SK-N-SH (cell line): ENCODE measurements at regions of chr22 and their contacts with region 1.

Region 1: GRCh38 chr22:49305214-49305909 is 522.3 kb downstream of the BRD1 start:
- DNase-seq: peak; percentile 90
- H3K4me3 ChIP-seq: no peak overlapping the region
- H3K27ac ChIP-seq: peak overlapping the region in 1 of 2 experiments; percentile 53; a peak in 1 of 4 replicates
- H3K4me1 ChIP-seq: peaks cover 0 to 18% of the 10 kb centered on the region in 2 experiments; a peak in 1 of 4 replicates
- H3K27me3 ChIP-seq: no peaks in the 10 kb centered on the region; the same call in 1 of the 2 replicates
- CTCF ChIP-seq: peak; percentile 59
- EP300 ChIP-seq: no peak
- RAD21 ChIP-seq: peak; percentile 85

Region 2: DNA sequence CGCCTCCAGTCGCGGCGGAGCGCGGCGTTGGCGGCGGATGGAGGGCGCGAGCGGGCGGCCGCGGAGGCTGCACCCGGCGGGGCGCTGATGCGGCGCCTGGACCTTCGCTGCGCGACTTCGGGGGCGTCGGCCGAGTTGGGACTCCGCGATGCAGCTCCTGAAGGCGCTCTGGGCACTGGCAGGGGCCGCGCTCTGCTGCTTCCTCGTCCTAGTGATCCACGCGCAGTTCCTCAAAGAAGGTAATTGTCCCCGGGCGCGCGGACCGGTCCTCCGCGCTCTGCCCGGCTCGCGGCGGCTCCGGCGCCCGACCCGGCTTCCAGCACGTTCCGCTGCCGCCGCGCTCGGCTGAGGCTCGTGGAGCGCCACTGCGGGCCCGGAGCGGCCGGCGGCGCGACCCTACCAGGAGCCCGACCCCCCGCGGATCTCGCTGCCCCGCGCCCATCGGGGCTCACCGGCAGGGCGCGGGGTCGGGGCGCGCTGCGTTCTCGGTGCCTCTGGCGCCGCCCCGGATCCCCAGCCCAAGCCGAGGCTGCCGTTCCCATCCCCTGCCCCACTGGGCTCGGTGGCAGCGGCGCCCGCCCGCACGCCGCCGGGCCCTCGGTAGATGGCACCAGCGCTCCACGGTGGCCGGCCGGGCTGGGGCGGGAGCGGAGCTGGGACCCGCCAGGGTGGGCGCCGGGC is 728.9 kb before region 1 on chr22:
- CTCF ChIA-PET with region 1: interaction called, 37 read pairs
- POLR2A ChIA-PET with region 1: no interaction called
- DNase-seq: peak; percentile 88
- H3K4me3 ChIP-seq: peak overlapping the region in 1 of 2 experiments; percentile 38; a peak in 1 of 4 replicates
- H3K27ac ChIP-seq: no peak overlapping the region; a peak in 1 of 4 replicates
- H3K4me1 ChIP-seq: no peaks in the 10 kb centered on the region; a peak in 1 of 4 replicates
- H3K27me3 ChIP-seq: peaks cover 6% of the 10 kb centered on the region; the same call in 1 of the 2 replicates
- CTCF ChIP-seq: peak; percentile 22; the same call in 1 of the 2 replicates
- EP300 ChIP-seq: no peak
- RAD21 ChIP-seq: peak; percentile 59

Region 3: DNA sequence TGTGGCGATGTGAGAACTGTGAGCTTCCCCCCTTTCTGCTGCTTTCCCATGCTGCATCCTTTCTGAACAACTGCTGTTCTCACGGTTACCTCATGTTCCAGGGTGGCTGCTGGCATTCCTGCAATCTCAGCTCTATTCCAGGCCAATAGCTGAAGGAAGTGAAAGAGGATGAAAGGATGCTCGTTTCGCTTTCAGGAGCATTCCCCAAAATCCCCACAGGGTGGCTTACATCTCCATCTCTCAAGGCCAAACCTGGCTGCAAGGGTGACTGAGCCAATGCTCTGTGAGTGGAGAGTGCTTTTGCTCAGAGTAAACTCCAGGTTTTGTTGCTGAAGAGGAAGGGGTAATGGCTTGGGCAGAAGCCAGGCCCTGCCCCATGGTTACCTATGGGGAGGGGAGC is 325.9 kb before region 1 on chr22:
- CTCF ChIA-PET with region 1: interaction called, 18 read pairs
- POLR2A ChIA-PET with region 1: no interaction called
- DNase-seq: no peak
- H3K4me3 ChIP-seq: no peak overlapping the region
- H3K27ac ChIP-seq: no peak overlapping the region
- H3K4me1 ChIP-seq: peaks cover 0 to 17% of the 10 kb centered on the region in 2 experiments; a peak in 1 of 4 replicates
- H3K27me3 ChIP-seq: no peaks in the 10 kb centered on the region; the same call in 1 of the 2 replicates
- CTCF ChIP-seq: 0 out of 2 replicates have a peak, but pooled peaks have one; percentile 10
- EP300 ChIP-seq: no peak
- RAD21 ChIP-seq: peak; percentile 34

Region 4: DNA sequence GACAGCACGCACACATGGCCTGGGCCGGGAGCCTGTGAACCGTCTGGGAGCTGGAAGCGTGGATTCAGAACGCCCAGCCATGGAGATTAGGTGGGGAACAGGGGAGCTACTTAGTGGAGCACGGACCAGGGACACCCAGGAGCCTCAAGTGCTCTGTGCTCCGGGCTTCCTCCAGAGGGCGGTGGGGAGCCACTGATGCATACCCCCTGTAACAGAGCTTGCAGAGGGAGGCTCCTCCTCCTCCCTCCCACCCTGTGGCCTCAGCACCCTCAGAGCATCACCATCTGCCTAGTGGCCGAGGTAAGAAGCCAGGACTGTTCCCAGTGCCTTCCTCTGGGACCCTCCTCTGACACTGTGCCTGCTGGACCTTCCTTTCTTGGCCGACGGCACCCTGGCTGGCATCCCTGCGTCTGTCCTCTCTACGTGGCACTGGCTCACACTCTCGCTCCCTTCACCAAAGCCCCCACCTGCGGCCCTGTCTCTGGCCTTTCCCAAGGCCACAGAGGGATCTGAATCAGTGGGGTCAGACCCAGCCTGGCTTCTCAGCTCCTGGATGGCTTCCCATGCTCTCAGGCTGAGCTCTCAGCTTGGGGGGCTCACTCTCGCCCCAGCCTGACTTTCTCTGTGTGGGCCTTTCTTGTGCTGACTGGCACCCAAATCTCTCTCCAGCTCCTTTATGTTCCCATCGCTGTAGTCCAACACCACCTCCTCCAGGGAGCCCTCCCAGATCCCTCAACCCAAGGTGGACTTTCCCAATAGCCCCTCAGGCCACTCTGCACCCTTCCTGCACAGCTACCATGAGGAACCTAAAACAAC is 258.6 kb before region 1 on chr22:
- CTCF ChIA-PET with region 1: interaction called, 103 read pairs
- POLR2A ChIA-PET with region 1: no interaction called
- DNase-seq: peak; percentile 87
- H3K4me3 ChIP-seq: no peak overlapping the region
- H3K27ac ChIP-seq: peak overlapping the region in 1 of 2 experiments; percentile 12; a peak in 1 of 4 replicates
- H3K4me1 ChIP-seq: peaks cover 0 to 36% of the 10 kb centered on the region in 2 experiments; a peak in 2 of 4 replicates
- H3K27me3 ChIP-seq: no peaks in the 10 kb centered on the region; the same call in 1 of the 2 replicates
- CTCF ChIP-seq: peak; percentile 34; the same call in 1 of the 2 replicates
- EP300 ChIP-seq: no peak
- RAD21 ChIP-seq: peak; percentile 79

Region 5: GRCh38 chr22:49087198-49087597 is 218.2 kb before region 1 on chr22:
- CTCF ChIA-PET with region 1: no interaction called
- POLR2A ChIA-PET with region 1: no interaction called
- DNase-seq: no peak
- H3K4me3 ChIP-seq: no peak overlapping the region
- H3K27ac ChIP-seq: peak overlapping the region in 1 of 2 experiments; percentile 45; a peak in 1 of 4 replicates
- H3K4me1 ChIP-seq: peaks cover 0 to 19% of the 10 kb centered on the region in 2 experiments; a peak in 1 of 4 replicates
- H3K27me3 ChIP-seq: no peaks in the 10 kb centered on the region; the same call in 1 of the 2 replicates
- CTCF ChIP-seq: no peak
- EP300 ChIP-seq: no peak
- RAD21 ChIP-seq: no peak

Region 6: GRCh38 chr22:49317387-49317786 is 12.0 kb after region 1 on chr22:
- CTCF ChIA-PET with region 1: interaction called, 10 read pairs
- POLR2A ChIA-PET with region 1: no interaction called
- DNase-seq: no peak
- H3K4me3 ChIP-seq: no peak overlapping the region
- H3K27ac ChIP-seq: no peak overlapping the region
- H3K4me1 ChIP-seq: peaks cover 0 to 3% of the 10 kb centered on the region in 2 experiments; a peak in 1 of 4 replicates
- H3K27me3 ChIP-seq: 0 out of 2 replicates have a peak, but pooled peaks cover 6% of the 10 kb centered on the region
- CTCF ChIP-seq: peak; percentile 35
- EP300 ChIP-seq: no peak
- RAD21 ChIP-seq: peak; percentile 30; the same call in 1 of the 2 replicates

Region 7: DNA sequence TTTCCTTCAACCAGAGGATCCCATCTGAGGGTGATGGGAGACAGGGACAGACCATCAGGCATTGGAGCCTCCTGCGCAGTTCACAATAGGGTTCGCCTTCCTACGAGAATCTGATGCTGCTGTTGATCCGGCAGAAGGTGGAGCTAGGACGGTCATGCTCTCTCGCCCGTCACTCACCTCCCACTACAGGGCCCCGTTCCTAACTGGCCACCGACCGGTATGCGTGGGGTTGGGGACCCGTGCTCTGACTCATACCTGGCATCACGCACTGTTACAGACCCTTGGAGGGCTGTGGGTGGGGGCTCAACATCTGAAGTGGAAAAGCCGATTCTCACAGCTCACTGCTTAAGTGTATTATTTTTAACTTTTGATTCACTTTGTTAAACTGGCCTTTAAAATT is 120.0 kb after region 1 on chr22:
- CTCF ChIA-PET with region 1: no interaction called
- POLR2A ChIA-PET with region 1: no interaction called
- DNase-seq: no peak
- H3K4me3 ChIP-seq: no peak overlapping the region
- H3K27ac ChIP-seq: no peak overlapping the region
- H3K4me1 ChIP-seq: no peaks in the 10 kb centered on the region
- H3K27me3 ChIP-seq: no peaks in the 10 kb centered on the region; the same call in 1 of the 2 replicates
- CTCF ChIP-seq: no peak
- EP300 ChIP-seq: no peak
- RAD21 ChIP-seq: no peak